ENCODE measurements at regions of chr19 and their contacts with region 1.

Region 1: GRCh38 chr19:8342684-8343482 is at the start of gene KANK3:
- DNase-seq: peak; percentile 86
- H3K4me3 Mint-ChIP-seq: peak within 1 kb of the TSS; percentile 79
- H3K27ac Mint-ChIP-seq: no peak within 1 kb of the TSS
- H3K4me1 Mint-ChIP-seq: peaks cover 5% of the 10 kb centered on the region
- H3K27me3 Mint-ChIP-seq: peaks cover 39% of the 10 kb centered on the region
- total RNA-seq, gene KANK3: 0.86 and 1.4 TPM in 2 replicates

Region 2: DNA sequence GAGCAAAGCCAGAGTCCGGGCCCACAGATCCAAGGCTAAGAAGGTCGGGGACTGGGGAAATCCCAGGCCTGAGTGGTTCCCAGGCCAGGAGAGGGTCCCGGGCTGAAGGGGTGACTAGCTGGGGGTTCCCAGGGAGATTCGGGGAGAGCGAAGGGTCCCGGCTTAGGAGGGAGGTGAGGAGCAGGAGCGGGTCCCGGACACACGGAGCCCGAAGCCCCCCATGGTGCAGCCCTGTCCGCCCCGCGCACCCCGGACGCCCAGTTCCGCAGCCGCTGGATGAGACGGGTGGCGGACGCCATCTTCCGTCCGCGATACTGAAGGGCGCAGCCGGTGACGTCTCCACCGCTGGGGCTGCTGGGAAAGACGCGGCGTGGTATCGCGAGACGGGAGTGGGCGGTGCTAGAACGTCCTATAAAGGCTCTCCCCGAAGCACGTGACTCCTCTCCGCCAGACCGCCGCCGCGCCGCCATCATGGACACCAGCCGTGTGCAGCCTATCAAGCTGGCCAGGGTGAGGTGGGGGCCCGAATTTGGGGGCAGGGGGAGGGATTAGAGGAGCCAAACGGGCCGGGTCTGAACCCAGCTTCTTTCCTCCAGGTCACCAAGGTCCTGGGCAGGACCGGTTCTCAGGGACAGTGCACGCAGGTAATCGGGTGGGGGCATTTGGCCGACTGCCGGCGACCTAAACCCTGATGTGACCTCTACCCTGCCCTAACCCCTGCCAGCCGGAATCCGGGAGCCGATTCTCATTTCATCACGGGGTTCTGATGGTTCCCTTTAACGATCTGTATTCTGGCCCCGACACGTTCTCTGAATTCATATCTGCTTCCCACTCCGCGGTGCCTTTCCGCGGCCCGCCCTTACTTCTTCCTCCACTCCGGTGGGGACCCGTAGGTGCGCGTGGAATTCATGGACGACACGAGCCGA is 21.6 kb before region 1 on chr19 and contains the starts of genes NDUFA7 and RPS28:
- intact Hi-C with region 1: loop called (anchors 1 kb)
- DNase-seq: peak; percentile 96
- H3K4me3 Mint-ChIP-seq: peak within 1 kb of the TSS; percentile 100
- H3K27ac Mint-ChIP-seq: peak within 1 kb of the TSS; percentile 99
- H3K4me1 Mint-ChIP-seq: peaks cover 31% of the 10 kb centered on the region
- H3K27me3 Mint-ChIP-seq: no peaks in the 10 kb centered on the region
- total RNA-seq, gene NDUFA7: 51.1 and 51.8 TPM in 2 replicates
- total RNA-seq, gene RPS28: 1,836 and 1,872 TPM in 2 replicates

Region 3: DNA sequence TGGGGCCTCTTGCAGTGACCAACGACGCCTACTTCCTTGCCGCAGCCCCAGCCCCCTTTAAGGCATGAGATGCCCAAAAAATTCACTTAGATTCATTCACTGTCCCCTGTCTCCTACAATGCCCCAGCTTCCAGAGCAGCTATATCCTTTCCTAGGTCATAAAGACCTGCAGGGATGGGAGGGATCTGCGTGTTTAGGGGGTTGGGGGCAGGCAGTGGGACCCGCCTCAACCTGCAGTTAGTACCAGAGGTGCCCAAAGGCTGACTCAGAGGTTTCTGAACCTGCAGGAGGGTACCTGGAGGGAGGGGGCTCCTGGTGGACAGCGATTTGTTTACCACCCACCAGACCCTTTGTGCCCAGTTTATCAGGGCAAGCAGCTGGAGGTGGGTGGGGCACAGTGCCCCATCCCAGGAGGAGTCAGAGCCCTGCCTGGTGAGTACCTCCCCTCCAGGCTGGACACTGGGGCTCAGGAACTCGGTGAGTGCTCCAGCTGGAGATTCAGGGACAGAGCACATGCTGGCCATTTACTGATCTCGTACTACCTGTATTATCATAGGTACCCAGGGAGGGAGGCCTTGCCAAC is 11.5 kb before region 1 on chr19:
- intact Hi-C with region 1: no loop called
- DNase-seq: no peak
- H3K4me3 Mint-ChIP-seq: no peak overlapping the region
- H3K27ac Mint-ChIP-seq: no peak overlapping the region
- H3K4me1 Mint-ChIP-seq: peaks cover 5% of the 10 kb centered on the region
- H3K27me3 Mint-ChIP-seq: peaks cover 28% of the 10 kb centered on the region